Posterior cingulate gyrus (tissue), 11 donors: ENCODE measurements at regions of chr3 and their contacts with region 1.

Region 1: GRCh38 chr3:186806089-186807055 is at the start of gene RFC4:
- DNase-seq: peak; percentile 77 to 98 (median 90)

Region 2: GRCh38 chr3:186705882-186706780 is 100.2 kb before region 1 on chr3:
- intact Hi-C with region 1: no loop called
- DNase-seq: no peak

Region 3: DNA sequence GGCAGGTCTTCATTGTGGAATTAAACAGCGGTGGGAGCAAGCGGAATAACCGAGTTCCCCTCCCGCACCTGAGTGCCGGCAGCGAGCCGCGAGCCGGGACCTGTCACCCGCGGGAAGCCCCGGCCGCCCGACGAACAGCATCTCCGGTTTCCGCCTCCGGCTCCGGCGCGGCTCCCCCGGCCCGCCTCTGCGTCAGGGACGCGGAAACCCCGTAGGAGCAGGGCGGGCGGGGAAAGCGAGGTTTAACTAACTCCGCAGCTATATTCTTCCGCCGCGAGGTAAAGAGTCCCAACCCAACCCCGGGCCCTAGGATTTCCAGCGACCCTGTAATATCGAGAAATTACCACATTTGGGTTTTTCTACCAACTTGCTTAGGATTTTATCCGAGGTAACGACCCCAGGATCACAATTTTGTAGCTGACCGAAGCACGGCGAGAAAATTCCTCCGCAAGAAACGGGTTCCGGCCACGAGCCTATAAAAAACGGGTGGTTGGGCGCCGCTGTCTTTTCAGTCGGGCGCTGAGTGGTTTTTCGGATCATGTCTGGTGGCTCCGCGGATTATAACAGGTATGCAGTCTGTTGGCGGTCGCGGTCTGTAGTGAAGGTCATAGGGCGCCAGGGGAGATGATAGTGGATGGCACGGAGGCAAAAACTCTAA is 23.2 kb before region 1 on chr3 and contains the start of gene EIF4A2:
- intact Hi-C with region 1: loop called (anchors 2 kb)
- DNase-seq: peak; percentile 80 to 98 (median 86)